ENCODE measurements at regions of chr6 and their contacts with region 1.

Region 1: DNA sequence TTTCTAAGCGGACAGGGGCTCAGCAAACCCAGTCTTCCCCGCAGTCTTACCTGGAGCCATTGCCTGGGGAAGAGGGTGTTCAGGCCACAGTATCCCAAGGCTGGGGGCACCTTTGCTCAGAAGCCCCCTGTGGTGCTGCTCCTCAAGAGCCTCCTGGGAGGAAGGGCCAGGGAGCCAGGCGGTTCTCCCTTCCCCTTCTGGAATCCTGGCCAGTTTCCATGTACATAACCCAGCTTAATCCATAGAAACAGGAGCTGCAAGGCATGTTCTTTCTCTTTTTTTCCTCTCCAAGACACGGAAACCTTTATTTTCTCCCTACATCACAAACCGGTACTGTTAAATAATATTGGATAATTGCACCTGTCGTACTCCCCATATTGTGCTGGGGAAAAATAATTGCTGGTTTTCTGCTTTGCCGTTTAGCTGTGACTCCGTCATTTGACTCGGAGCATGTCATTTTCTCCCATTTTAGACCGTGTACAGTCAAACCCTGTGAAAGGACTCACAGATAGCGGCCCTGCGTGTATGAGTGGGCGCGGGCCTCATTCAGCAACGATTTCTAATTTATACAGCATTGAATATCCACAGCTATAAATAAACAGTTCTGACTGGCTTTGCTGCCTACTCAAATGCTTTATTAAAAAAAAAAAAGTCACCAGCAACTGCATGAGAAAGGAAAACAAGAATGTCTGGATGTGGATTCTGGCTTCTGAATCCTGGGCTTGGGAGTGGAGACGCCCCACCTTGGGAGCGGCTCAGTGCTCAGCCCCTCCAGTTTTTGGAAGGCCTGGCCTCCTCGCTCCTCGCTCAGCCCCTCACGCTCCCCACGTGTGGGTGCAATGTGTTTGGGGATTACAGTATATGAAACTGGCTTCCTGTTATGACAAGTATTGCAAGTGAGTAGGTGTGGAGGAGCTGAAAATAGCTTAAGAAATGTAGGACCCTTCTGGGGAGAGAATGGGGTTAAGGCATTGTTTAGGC is 67.3 kb downstream of the ADTRP start:
- DNase-seq: peak; percentile 80
- H3K4me3 Mint-ChIP-seq: peak overlapping the region; percentile 83
- H3K27ac Mint-ChIP-seq: peak overlapping the region; percentile 99
- H3K4me1 Mint-ChIP-seq: peaks cover 71% of the 10 kb centered on the region
- H3K27me3 Mint-ChIP-seq: no peaks in the 10 kb centered on the region

Region 2: GRCh38 chr6:11665604-11666326 is 45.5 kb before region 1 on chr6:
- intact Hi-C with region 1: loop called (anchors 5 kb)
- DNase-seq: no peak
- H3K4me3 Mint-ChIP-seq: no peak overlapping the region
- H3K27ac Mint-ChIP-seq: peak overlapping the region; percentile 76
- H3K4me1 Mint-ChIP-seq: peaks cover 12% of the 10 kb centered on the region
- H3K27me3 Mint-ChIP-seq: peaks cover 2% of the 10 kb centered on the region

Region 3: GRCh38 chr6:11732036-11732631 is 20.8 kb after region 1 on chr6:
- intact Hi-C with region 1: loop called (anchors 1 kb)
- DNase-seq: peak; percentile 76
- H3K4me3 Mint-ChIP-seq: peak overlapping the region; percentile 64
- H3K27ac Mint-ChIP-seq: peak overlapping the region; percentile 93
- H3K4me1 Mint-ChIP-seq: peaks cover 61% of the 10 kb centered on the region
- H3K27me3 Mint-ChIP-seq: no peaks in the 10 kb centered on the region

Region 4: DNA sequence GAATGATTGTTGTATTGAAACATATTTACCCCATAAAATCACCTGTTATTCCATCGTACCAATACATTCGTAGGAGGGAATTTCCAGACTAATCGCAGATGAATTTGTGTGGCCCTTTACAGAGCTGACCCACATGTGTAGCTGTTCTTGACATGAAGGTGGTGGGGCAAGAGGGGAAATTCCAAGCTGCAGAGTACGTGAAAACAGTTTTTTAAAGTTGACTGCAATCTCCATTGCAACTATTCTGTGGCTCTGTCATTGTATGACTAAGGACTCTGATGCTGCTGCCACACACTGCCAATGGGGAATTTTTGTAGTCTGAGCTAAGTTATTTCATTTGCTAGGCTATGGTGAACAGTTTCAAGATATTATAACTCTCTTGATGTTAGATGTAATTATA is 113.7 kb after region 1 on chr6:
- intact Hi-C with region 1: loop called (anchors 1 kb)
- DNase-seq: peak; percentile 62
- H3K4me3 Mint-ChIP-seq: no peak overlapping the region
- H3K27ac Mint-ChIP-seq: peak overlapping the region; percentile 80
- H3K4me1 Mint-ChIP-seq: peaks cover 8% of the 10 kb centered on the region
- H3K27me3 Mint-ChIP-seq: no peaks in the 10 kb centered on the region

Region 5: DNA sequence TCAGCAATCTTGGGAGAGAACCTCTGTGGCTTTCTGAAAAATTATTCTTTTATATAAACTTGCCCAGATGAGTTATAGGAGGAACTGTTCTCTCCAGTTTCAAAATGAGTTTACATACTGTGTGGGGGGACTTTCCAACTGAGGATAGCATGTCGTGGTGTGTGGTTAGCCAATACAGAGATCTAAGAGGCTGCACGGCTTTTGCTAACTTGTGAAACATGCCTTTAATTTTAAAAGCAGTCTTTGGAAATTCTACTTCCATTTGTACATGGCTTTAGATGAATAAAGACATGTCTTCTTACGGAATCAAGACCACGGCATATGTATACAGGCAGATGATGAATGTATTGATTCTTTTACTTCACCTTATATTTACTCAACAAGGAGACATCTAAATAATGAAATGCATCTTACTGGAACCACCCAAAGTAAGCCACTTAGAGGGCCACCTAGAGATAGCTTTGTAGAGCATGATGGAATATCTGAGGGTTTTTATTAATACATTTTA is 340.6 kb after region 1 on chr6:
- intact Hi-C with region 1: loop called (anchors 1 kb)
- DNase-seq: peak; percentile 93
- H3K4me3 Mint-ChIP-seq: peak overlapping the region; percentile 84
- H3K27ac Mint-ChIP-seq: peak overlapping the region; percentile 93
- H3K4me1 Mint-ChIP-seq: peaks cover 63% of the 10 kb centered on the region
- H3K27me3 Mint-ChIP-seq: no peaks in the 10 kb centered on the region

Region 6: DNA sequence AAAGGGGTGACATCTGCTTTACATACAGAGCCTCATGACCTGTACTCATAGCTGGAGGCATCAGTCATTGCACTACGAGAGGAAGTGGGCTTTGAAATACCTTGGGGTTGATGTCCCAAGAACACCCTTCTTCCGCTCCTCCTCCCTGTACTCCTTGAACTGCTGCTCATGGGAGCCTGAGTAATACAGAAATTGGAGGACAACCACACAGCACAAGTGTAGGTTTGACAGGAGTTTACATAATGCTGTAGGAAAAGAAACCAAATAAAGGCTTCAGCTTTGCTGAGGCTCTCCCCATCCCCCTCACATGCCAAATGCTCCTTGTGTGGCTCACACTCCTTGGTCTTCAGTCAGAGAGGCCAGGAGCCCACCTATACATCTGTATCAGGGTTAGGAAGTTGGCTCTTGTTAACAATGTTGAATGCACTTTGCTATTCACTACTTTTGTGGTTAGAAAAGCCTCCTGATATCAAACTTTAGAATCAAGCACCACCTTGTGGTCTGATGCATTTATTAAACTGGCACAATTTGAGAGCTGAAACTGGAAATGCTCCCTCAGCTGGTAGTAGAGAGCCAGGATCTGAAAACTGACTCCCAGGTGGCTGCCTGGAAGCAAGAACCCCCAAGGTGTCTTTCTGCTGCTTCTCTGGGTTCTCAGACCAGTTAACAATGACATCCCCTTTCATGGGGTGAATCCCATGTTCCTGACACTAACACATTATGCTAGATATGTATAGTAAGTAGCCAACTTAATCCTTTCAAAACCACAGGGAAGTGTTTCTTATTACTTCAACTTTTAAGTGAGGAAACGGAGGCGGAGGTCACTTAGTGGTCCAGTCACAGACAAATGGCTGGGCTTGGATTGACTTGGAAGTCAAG is 522.6 kb after region 1 on chr6:
- intact Hi-C with region 1: loop called (anchors 5 kb)
- DNase-seq: peak; percentile 82
- H3K4me3 Mint-ChIP-seq: peak overlapping the region; percentile 22
- H3K27ac Mint-ChIP-seq: peak overlapping the region; percentile 64
- H3K4me1 Mint-ChIP-seq: peaks cover 42% of the 10 kb centered on the region
- H3K27me3 Mint-ChIP-seq: peaks cover 1% of the 10 kb centered on the region

Measured in activated CD4-positive, alpha-beta T cell treated with anti-CD3 and anti-CD28 coated beads, Interleukin-2, amount 10 ng/mL, durations not matched to agents 24 days and 14 days (primary cell).